ENCODE measurements at regions of chr3 and their contacts with region 1.

Region 1: GRCh38 chr3:75218577-75218976 is 445.6 kb upstream of the FRG2C start:
- DNase-seq: no peak
- H3K4me3 Mint-ChIP-seq: no peak overlapping the region
- H3K27ac Mint-ChIP-seq: no peak overlapping the region
- H3K4me1 Mint-ChIP-seq: peaks cover 2% of the 10 kb centered on the region
- H3K27me3 Mint-ChIP-seq: no peaks in the 10 kb centered on the region
- CTCF ChIP-seq: no peak

Region 2: DNA sequence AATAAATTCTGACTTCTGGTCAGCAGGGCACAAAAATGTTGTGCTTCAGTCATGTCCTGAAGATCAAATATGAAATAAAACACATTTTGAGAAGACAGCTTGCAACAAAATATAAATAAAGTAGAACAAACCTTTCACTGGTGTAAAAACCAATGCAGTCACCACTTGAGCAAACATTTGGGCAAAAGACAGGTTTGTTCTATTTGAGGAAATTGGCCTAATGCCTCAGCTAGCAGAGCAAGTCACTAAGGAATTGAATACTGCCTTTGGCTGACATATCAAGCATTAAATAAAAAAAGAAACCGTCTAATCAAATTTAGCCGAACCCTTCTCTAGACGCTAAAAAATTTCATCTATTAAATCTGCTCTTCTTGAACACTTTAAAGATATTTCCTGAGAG is 128.7 kb before region 1 on chr3:
- CTCF ChIA-PET with region 1: no interaction called
- intact Hi-C with region 1: no loop called
- DNase-seq: no peak
- H3K4me3 Mint-ChIP-seq: no peak overlapping the region
- H3K27ac Mint-ChIP-seq: no peak overlapping the region
- H3K4me1 Mint-ChIP-seq: no peaks in the 10 kb centered on the region
- H3K27me3 Mint-ChIP-seq: no peaks in the 10 kb centered on the region
- CTCF ChIP-seq: no peak

Region 3: DNA sequence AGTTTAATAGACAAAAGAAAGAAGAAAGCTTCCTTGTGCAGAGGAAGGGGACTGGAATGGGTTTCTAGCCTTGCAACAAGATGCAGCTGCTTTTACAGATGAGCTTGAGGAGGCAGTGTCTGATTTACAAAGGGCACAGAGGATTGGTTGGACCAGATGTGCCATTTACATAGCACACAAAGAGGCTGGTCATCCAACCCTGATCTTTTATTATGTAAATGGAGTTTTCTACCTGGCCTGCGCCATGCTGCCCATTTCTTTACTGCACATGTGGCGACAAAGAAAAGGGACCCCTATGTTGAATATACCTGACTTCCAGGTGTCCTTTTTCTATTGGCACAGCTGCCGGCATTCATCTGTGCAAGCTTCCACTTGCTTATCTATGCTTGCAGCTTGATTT is 36.1 kb after region 1 on chr3:
- CTCF ChIA-PET with region 1: no interaction called
- intact Hi-C with region 1: loop called (anchors 2 kb)
- DNase-seq: no peak
- H3K4me3 Mint-ChIP-seq: no peak overlapping the region
- H3K27ac Mint-ChIP-seq: no peak overlapping the region
- H3K4me1 Mint-ChIP-seq: no peaks in the 10 kb centered on the region
- H3K27me3 Mint-ChIP-seq: no peaks in the 10 kb centered on the region
- CTCF ChIP-seq: no peak

Region 4: DNA sequence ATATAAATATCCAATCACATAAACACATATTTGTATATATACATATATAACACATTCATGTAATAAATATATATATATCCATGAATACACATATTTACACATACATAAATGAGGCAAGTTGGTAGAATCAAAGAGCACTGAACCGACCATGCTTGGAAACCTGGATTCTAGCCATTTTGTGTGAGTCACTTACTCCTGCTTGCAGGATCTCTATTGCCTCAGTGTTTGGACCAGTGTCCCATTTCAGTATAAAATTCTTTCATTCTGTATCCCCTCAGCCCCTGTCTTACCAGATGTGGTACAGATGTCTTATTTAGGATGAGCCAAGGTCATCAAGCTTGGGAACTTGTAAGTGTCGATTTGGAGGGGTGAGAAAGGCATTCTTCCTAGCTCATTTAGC is 54.1 kb after region 1 on chr3:
- CTCF ChIA-PET with region 1: no interaction called
- intact Hi-C with region 1: no loop called
- DNase-seq: no peak
- H3K4me3 Mint-ChIP-seq: no peak overlapping the region
- H3K27ac Mint-ChIP-seq: no peak overlapping the region
- H3K4me1 Mint-ChIP-seq: no peaks in the 10 kb centered on the region
- H3K27me3 Mint-ChIP-seq: no peaks in the 10 kb centered on the region
- CTCF ChIP-seq: no peak